Right ventricle myocardium superior (tissue), 1 donor: ENCODE measurements at regions of chr4 and their contacts with region 1.

Region 1: DNA sequence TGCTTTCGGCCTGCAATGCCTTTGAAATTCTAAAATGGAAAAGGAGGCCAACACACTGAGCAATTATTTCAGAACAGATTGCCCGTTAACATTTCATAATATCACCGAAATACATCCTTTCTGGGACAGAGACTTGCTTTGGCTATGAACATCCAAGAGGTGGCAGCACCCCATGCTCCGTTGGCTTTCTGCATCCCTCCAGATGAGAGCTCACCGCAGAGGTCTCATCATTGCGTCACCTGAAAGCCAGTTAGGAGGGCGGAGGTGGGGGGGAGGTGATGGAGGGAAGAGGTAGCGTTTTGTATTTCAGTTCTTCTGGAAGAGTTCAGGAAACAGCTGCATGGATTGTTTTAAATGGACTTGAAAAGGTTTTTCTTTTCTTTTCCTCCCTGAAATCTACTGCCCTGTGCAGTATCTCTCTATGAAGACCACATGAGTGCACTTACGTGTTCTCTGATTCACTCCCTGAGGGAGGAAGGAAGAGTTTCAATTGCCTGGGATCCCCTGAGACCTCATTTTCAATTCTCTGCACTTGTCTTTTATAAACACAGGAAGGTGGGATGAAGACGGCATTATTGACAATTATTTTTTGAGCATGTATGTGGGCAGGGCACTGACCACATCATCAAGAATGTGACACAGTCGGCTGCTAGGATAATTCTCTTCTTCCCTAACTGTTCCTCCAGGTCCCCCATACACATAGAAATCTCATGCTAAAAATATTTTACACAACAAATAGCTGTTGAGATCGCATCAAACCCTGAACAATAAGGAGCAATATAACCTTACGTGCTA is 166.9 kb upstream of the PGRMC2 start:
- DNase-seq: peak; percentile 77
- ATAC-seq: peak; percentile 94

Region 2: DNA sequence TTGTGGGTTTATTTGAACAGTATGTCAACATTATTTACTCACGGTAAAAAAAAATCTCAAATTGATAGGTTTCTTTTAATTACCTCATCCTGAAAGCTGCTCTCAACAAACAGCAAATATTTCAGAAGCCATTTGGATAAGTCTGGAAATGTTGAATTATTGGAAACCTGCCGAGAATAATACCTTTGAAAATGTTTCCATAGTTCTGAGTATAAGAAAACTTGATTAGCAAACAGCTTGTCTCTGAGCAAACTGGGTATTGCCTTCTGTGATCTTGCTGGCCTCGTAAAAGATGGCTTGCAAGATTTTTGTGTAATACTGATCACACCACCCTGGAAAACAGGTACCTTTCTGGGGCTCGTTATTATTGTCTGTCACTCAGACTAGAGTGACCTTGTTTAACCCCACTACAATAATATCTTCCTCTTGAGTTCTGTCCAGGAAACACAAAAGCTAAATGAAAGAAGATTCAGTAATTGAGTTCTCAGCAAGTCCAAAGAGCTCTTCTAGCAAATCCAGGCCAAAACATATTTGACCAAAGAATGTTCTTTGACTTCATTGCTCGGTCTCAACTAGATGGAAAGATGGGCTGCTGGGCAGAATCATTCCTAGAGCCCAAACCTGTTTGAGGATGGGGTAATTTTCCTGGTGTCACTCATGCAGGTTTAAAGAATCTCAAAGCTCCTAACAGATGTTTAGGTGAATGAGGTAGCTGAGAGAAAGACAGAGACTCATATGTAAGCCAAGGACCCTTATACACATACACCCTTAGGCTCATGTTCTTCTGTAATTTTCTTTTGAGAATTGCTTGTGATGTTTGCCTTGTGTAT is 99.4 kb after region 1 on chr4:
- intact Hi-C with region 1: loop called (anchors 5 kb)
- DNase-seq: no peak
- ATAC-seq: peak; percentile 42

Region 3: GRCh38 chr4:128675083-128675482 is 220.6 kb after region 1 on chr4:
- intact Hi-C with region 1: no loop called
- DNase-seq: no peak
- ATAC-seq: peak; percentile 85